Naive thymus-derived CD4-positive, alpha-beta T cell (primary cell): ENCODE measurements at regions of chr5 and their contacts with region 1.

Region 1: DNA sequence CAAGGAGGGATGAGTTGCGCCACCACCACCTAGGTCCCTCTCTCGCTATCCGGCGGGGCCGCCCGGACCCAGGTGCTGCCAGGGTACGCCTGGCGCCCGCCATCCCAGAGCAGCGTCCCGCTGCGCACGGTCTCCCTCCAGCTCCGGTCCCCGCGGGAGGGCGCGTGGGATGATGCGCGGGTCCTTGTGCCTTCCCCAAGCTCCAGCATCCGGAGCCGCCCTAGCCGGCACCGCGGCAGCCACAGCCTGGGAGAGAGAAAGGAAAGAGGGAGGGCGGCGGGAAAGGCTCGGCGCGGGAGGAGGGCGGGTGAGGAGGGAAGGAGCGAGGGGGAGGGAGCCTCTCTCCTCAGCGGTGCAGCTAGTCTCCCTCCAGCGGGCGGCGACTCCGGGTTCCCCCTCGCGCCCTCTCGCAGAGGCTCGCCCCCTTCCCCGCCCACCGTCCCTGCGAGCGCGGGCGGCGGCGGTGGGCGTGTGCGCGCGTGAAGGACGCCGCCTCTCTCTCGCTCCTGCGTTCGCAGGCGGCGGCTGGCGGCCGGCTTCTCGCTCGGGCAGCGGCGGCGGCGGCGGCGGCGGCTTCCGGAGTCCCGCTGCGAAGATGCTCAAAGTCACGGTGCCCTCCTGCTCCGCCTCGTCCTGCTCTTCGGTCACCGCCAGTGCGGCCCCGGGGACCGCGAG is at the start of gene CAMK4:
- DNase-seq: peak; percentile 74 to 87 (median 84)
- ATAC-seq: peak; percentile 95
- H3K4me3 ChIP-seq: peak within 1 kb of the TSS; percentile 81
- H3K4me3 Mint-ChIP-seq: peak within 1 kb of the TSS; percentile 79 to 99 (median 96)
- H3K27ac ChIP-seq: peak within 1 kb of the TSS; percentile 93
- H3K27ac Mint-ChIP-seq: peak within 1 kb of the TSS; percentile 89 to 99 (median 97)
- H3K4me1 ChIP-seq: peaks cover 17 to 25% of the 10 kb centered on the region in 2 donors
- H3K4me1 Mint-ChIP-seq: peaks cover 15 to 39% (median 26%) of the 10 kb centered on the region in 7 donors
- H3K27me3 ChIP-seq: no peaks in the 10 kb centered on the region
- H3K27me3 Mint-ChIP-seq: peaks cover 0 to 4% (median 0%) of the 10 kb centered on the region in 5 donors
- total RNA-seq, gene CAMK4: 118 to 366 (median 210) TPM

Region 2: DNA sequence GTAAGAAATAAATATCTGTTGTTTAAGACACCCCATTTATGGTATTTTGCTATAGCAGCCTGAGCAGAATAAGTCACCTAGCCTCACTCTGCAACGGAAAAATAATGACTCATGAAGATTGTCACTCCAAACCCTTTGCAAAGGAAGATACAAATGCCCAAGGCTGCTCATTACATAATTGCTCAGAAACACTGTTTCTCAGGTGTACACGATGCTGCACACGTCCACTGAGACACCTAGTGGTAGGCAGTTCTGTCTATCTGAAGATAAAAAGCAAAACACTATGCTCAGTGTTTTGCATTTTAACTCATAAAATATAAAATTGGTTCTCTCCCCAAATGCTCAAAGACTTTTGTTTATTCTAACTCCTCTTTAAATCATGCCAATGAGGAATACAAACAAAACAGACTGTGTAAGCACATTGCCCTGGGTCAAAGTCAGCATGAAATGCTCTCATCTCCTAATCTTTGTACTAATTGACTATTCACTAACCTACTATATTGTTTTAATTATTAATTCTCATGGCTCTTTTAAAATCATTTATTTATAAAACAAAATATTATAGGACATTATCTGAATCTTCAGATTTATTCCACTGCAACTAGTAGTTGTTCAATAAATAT is 160.2 kb before region 1 on chr5:
- CTCF ChIA-PET with region 1: no interaction called
- POLR2A ChIA-PET with region 1: no interaction called
- intact Hi-C with region 1: no loop called
- DNase-seq: no peak
- ATAC-seq: no peak
- H3K4me3 ChIP-seq: no peak overlapping the region
- H3K4me3 Mint-ChIP-seq: no peak overlapping the region
- H3K27ac ChIP-seq: no peak overlapping the region
- H3K27ac Mint-ChIP-seq: no peak overlapping the region
- H3K4me1 ChIP-seq: no peaks in the 10 kb centered on the region
- H3K4me1 Mint-ChIP-seq: no peaks in the 10 kb centered on the region
- H3K27me3 ChIP-seq: peaks cover 0 to 5% of the 10 kb centered on the region in 2 donors
- H3K27me3 Mint-ChIP-seq: peaks cover 58 to 72% (median 64%) of the 10 kb centered on the region in 5 donors

Region 3: GRCh38 chr5:111158105-111158744 is 65.8 kb before region 1 on chr5:
- CTCF ChIA-PET with region 1: interaction called, 26 read pairs
- POLR2A ChIA-PET with region 1: interaction called, 4 read pairs
- intact Hi-C with region 1: loop called (anchors 1 kb)
- DNase-seq: peak; percentile 46 to 79 (median 70)
- ATAC-seq: peak; percentile 91
- H3K4me3 ChIP-seq: no peak overlapping the region
- H3K4me3 Mint-ChIP-seq: no peak overlapping the region
- H3K27ac ChIP-seq: no peak overlapping the region
- H3K27ac Mint-ChIP-seq: no peak overlapping the region
- H3K4me1 ChIP-seq: no peaks in the 10 kb centered on the region
- H3K4me1 Mint-ChIP-seq: peaks cover 0 to 10% (median 0%) of the 10 kb centered on the region in 7 donors
- H3K27me3 ChIP-seq: no peaks in the 10 kb centered on the region
- H3K27me3 Mint-ChIP-seq: peaks cover 0 to 8% (median 0%) of the 10 kb centered on the region in 5 donors

Region 4: GRCh38 chr5:111211341-111211740 is 12.7 kb before region 1 on chr5:
- CTCF ChIA-PET with region 1: interaction called, 5 read pairs
- POLR2A ChIA-PET with region 1: interaction called, 7 read pairs
- intact Hi-C with region 1: loop called (anchors 1 kb)
- DNase-seq: no peak
- ATAC-seq: no peak
- H3K4me3 ChIP-seq: no peak overlapping the region
- H3K4me3 Mint-ChIP-seq: peak overlapping the region in 9 of 10 donors; percentile 2 to 76 (median 66)
- H3K27ac ChIP-seq: no peak overlapping the region
- H3K27ac Mint-ChIP-seq: peak overlapping the region in 4 of 9 donors; percentile 7 to 47 (median 19)
- H3K4me1 ChIP-seq: no peaks in the 10 kb centered on the region
- H3K4me1 Mint-ChIP-seq: peaks cover 3 to 43% (median 32%) of the 10 kb centered on the region in 7 donors
- H3K27me3 ChIP-seq: no peaks in the 10 kb centered on the region
- H3K27me3 Mint-ChIP-seq: no peaks in the 10 kb centered on the region

Region 5: GRCh38 chr5:111254613-111255012 is 30.6 kb after region 1 on chr5:
- CTCF ChIA-PET with region 1: interaction called, 8 read pairs
- POLR2A ChIA-PET with region 1: interaction called, 23 read pairs
- intact Hi-C with region 1: loop called (anchors 1 kb)
- DNase-seq: peak in 6 of 9 donors; percentile 36 to 90 (median 52)
- ATAC-seq: peak; percentile 93
- H3K4me3 ChIP-seq: no peak overlapping the region
- H3K4me3 Mint-ChIP-seq: peak overlapping the region; percentile 46 to 80 (median 70)
- H3K27ac ChIP-seq: peak overlapping the region; percentile 76
- H3K27ac Mint-ChIP-seq: peak overlapping the region; percentile 65 to 95 (median 85)
- H3K4me1 ChIP-seq: peaks cover 36 to 73% of the 10 kb centered on the region in 2 donors
- H3K4me1 Mint-ChIP-seq: peaks cover 0 to 78% (median 48%) of the 10 kb centered on the region in 7 donors
- H3K27me3 ChIP-seq: no peaks in the 10 kb centered on the region
- H3K27me3 Mint-ChIP-seq: no peaks in the 10 kb centered on the region

Region 6: GRCh38 chr5:111278845-111279504 is 54.9 kb after region 1 on chr5:
- CTCF ChIA-PET with region 1: interaction called, 65 read pairs
- POLR2A ChIA-PET with region 1: interaction called, 28 read pairs
- intact Hi-C with region 1: loop called (anchors 1 kb)
- DNase-seq: peak; percentile 75 to 89 (median 82)
- ATAC-seq: peak; percentile 99
- H3K4me3 ChIP-seq: no peak overlapping the region
- H3K4me3 Mint-ChIP-seq: peak overlapping the region; percentile 2 to 83 (median 64)
- H3K27ac ChIP-seq: no peak overlapping the region
- H3K27ac Mint-ChIP-seq: peak overlapping the region in 7 of 9 donors; percentile 8 to 94 (median 77)
- H3K4me1 ChIP-seq: peaks cover 7 to 13% of the 10 kb centered on the region in 2 donors
- H3K4me1 Mint-ChIP-seq: peaks cover 29 to 94% (median 90%) of the 10 kb centered on the region in 7 donors
- H3K27me3 ChIP-seq: no peaks in the 10 kb centered on the region
- H3K27me3 Mint-ChIP-seq: no peaks in the 10 kb centered on the region

Region 7: DNA sequence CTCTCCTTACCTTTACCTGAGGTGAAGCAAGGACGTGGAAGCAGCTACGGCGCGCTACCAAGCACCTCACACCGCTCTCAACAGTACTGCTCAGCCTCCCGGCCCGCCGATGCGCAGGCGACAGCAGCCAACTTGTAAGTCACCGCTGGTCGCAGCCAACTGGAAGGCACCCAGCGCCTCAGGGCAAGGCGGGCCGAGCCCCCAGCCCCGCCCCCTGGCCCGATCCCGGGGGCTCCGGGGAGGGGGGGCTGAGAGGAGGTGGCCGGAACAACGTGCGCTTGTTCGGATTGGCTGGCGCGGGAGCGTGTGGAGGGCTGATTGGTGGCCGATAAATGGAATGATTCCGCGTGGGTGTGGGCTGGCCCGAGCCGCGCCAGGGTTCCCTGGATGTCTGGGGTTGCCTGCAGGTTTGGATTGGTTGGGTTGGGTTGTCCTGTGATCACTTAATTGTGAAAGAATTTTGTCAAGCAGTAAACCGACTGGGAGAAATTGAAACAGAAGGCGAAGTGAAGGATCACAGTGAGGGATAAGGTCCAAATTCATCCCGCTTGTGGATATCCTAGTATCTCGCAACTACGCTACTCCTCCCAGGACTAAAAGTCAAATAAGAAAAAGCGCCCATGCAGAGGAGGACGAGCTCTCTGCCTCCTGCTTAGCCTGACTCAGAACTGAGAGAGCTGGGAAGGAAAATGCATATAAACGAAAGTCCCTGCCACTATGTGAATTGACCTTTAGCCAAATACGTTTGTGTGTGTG is 288.5 kb after region 1 on chr5 and contains the start of gene STARD4:
- CTCF ChIA-PET with region 1: no interaction called
- POLR2A ChIA-PET with region 1: no interaction called
- intact Hi-C with region 1: loop called (anchors 1 to 2 kb)
- DNase-seq: peak; percentile 79 to 94 (median 92)
- ATAC-seq: peak; percentile 97
- H3K4me3 ChIP-seq: peak within 1 kb of the TSS; percentile 81
- H3K4me3 Mint-ChIP-seq: peak within 1 kb of the TSS; percentile 91 to 100 (median 98)
- H3K27ac ChIP-seq: peak within 1 kb of the TSS; percentile 73
- H3K27ac Mint-ChIP-seq: peak within 1 kb of the TSS; percentile 90 to 98 (median 94)
- H3K4me1 ChIP-seq: peaks cover 0 to 14% of the 10 kb centered on the region in 2 donors
- H3K4me1 Mint-ChIP-seq: peaks cover 17 to 53% (median 28%) of the 10 kb centered on the region in 7 donors
- H3K27me3 ChIP-seq: no peaks in the 10 kb centered on the region
- H3K27me3 Mint-ChIP-seq: no peaks in the 10 kb centered on the region
- total RNA-seq, gene STARD4: 11.1 to 70.8 (median 17.1) TPM